Mucosa of descending colon (tissue), 3 donors: ENCODE measurements at regions of chr2 and their contacts with region 1.

Region 1: DNA sequence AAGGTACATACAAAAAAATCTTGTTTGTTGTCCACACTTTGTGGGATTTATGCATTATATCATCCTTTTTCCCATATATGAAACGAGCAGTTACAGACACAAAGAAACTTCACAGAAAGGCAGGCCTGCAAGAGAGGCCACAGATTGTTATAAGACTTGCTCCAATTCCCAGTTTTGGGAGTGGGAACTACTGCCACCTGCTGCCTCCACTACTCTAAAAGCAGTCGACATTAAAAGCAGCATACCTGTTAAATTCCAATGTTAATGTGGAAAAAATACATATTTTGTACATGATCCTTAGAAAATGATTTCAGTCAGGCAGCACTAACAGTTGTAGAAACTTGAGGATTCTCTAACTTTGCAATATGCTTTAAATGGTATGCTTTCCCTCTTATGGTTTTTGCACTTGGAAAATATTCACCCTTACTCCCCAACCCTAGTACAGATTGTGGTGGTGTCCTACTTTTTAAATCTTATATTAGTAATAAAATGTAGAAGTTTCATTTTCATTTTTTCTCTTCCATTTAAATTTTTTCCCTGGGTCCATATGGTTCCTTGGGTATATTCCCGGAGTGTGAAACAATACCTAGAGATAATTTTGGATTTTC is 37.9 kb downstream of the SLC38A11 start:
- DNase-seq: peak in 2 of 3 donors; percentile 43 to 68
- ATAC-seq: peak; percentile 56
- H3K4me3 ChIP-seq: no peak overlapping the region
- H3K4me1 ChIP-seq: no peaks in the 10 kb centered on the region
- CTCF ChIP-seq: no peak

Region 2: GRCh38 chr2:164737612-164738081 is 179.8 kb before region 1 on chr2:
- intact Hi-C with region 1: loop called (anchors 5 to 10 kb)
- DNase-seq: peak; percentile 56 to 74 (median 65)
- ATAC-seq: peak; percentile 92
- H3K4me3 ChIP-seq: no peak overlapping the region
- H3K4me1 ChIP-seq: peaks cover 5% of the 10 kb centered on the region
- CTCF ChIP-seq: peak; percentile 42